Activated CD4-positive, alpha-beta T cell treated with anti-CD3 and anti-CD28 coated beads, Interleukin-2, amount 10 ng/mL, durations not matched to agents 7 days and 5 days (primary cell): ENCODE measurements at regions of chr7 and their contacts with region 1.

Region 1: GRCh38 chr7:131007394-131008330 is 273.7 kb upstream of the KLF14 start:
- DNase-seq: peak; percentile 79
- H3K4me3 Mint-ChIP-seq: peak overlapping the region; percentile 58
- H3K27ac Mint-ChIP-seq: peak overlapping the region; percentile 96
- H3K4me1 Mint-ChIP-seq: peaks cover 72% of the 10 kb centered on the region
- H3K27me3 Mint-ChIP-seq: no peaks in the 10 kb centered on the region

Region 2: GRCh38 chr7:130804220-130804619 is 203.4 kb before region 1 on chr7:
- CTCF ChIA-PET with region 1: no interaction called
- POLR2A ChIA-PET with region 1: no interaction called
- DNase-seq: no peak
- H3K4me3 Mint-ChIP-seq: no peak overlapping the region
- H3K27ac Mint-ChIP-seq: no peak overlapping the region
- H3K4me1 Mint-ChIP-seq: no peaks in the 10 kb centered on the region
- H3K27me3 Mint-ChIP-seq: peaks cover 17% of the 10 kb centered on the region

Region 3: DNA sequence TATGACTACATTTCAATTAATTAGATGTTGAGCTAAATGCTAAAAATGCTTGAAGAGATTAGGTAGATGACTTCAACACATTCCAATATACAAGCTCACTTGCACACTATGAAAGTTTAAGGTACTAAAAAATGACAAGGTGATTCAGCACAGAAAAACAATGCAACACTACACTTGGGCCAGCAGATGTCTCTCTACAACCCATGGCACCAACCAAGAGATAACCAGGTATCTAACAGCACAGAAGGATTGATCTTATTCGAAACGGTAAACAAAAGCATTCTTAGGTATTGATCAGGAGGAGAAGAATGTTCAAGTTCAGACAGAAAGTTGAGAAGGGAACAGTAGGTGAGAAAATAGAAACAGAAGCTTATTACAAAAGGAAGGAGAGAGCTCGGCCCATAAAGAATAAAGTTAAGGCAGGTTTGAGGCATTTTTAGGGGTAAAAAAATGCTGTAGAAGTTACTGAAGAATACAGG is 25.5 kb before region 1 on chr7:
- CTCF ChIA-PET with region 1: interaction called, 21 read pairs
- POLR2A ChIA-PET with region 1: no interaction called
- DNase-seq: peak; percentile 46
- H3K4me3 Mint-ChIP-seq: no peak overlapping the region
- H3K27ac Mint-ChIP-seq: no peak overlapping the region
- H3K4me1 Mint-ChIP-seq: peaks cover 33% of the 10 kb centered on the region
- H3K27me3 Mint-ChIP-seq: no peaks in the 10 kb centered on the region

Region 4: DNA sequence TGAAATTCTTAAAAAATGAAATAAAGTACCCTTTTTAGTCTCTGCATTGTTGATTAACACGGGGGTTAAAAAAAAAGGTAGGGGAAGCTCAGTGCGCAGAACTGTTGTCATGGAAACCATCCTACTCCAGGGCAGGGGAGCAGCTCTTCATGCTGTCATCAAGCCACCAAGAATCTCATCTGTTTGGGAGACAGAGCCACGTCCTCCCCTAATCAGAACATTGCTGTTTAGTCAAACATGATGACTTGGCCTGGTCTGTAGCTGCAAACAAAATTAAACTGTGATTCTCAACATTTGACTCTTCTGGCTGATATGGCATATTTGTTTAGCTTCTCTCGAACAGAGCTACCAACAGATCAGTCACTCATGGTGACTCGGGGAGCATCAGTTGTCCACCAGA is 19.2 kb before region 1 on chr7:
- CTCF ChIA-PET with region 1: interaction called, 21 read pairs
- POLR2A ChIA-PET with region 1: no interaction called
- DNase-seq: peak; percentile 17
- H3K4me3 Mint-ChIP-seq: no peak overlapping the region
- H3K27ac Mint-ChIP-seq: peak overlapping the region; percentile 81
- H3K4me1 Mint-ChIP-seq: peaks cover 69% of the 10 kb centered on the region
- H3K27me3 Mint-ChIP-seq: no peaks in the 10 kb centered on the region